ENCODE measurements at regions of chr4 and their contacts with region 1.

Region 1: DNA sequence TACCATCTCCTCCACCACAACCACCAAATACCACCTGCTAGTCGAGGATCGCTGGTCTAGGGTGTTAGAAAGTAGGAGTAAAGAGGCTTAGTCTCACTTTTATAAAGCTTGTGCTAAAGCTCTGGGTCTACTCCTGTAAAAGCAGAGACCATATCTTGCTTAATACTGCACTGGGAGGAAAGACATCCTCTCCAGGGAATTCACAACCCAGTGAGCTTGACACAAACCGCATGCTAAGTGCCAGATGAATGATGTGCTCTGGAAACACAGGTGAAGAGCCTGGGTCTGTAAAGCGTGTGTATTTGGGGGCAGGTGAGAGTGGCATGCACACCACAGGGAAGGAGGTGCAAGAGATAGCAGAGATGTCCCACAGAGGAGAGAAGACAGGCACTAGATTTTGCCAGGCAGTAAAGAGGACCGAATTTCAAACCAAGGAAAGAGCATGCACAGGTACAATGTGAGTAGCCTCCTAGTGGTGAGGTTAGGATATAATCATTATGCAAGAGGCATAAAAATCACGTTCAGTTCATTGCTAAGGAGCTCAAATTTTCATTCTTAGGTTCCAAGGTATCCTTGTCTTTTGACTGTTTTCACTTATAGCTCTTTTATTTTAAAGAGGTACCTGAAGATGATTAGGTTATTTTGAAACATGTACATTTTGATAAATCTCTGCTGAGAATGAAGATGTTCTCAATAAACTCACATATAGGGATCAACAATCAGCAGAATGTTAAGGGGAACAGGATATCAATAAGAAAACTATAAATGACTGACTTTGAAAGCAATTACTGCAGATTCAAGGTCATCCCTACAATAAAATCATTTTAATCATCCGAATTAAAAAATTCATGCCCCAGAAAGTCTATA is 20.7 kb downstream of the TAPT1 start:
- DNase-seq: peak; percentile 48

Region 2: GRCh38 chr4:16001484-16001858 is 204.1 kb before region 1 on chr4:
- in situ Hi-C with region 1: loop called (anchors 25 kb)
- DNase-seq: peak; percentile 89

Region 3: DNA sequence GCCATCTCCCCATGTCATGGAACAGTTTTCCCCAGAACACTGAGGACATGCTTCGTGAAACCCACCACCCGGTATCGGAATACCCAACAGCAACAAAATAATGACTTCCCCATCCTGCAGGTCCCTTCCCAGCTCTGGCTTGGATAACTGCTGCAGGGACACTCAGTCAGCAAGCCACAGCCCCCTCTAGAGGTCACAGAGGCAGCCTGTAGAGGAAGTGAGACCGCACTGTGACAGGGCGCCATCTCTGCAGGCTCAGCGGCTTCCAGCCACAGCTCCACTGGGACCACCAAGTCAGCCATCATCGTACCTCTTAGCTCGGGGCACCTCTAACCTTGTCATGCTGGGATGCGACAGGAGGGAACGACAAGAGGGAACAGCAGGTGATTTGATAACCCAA is 377.0 kb after region 1 on chr4:
- in situ Hi-C with region 1: no loop called
- DNase-seq: peak; percentile 70

Region 4: GRCh38 chr4:16692961-16693506 is 487.5 kb after region 1 on chr4:
- in situ Hi-C with region 1: no loop called
- DNase-seq: peak; percentile 88